Ovary (tissue), 10 donors: ENCODE measurements at regions of chr19 and their contacts with region 1.

Region 1: DNA sequence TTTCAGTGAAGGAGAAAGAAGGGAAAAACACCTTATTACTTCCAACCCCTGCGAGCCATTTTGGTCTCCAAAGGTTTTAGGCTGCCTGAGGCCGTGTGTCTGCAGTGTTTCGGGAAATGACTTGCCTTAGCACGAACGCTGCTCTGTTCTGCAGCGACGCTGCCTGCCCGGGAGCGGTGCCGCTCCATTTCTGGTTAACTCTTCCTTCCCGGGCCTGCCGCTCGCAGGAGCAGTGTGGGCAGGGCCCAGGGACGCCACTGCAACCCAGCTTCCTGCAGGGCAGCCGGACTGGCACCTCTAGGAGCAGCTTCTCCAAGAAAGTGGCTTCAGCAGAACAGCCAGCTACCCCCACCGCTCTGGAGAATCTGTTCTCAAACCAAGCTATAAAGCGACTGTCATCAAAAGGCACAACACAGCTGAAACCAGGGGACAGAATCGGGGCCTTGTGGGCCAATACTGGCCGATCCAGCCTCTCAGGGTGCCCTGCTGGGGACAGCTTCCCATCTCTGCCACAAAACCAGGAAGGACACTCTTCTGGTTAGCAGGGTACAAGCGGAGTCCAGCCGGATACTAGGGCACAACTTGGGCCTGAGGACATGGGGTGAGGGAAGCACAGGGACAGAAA is 72.2 kb downstream of the KCTD15 start:
- DNase-seq: peak in 3 of 5 donors; percentile 24 to 49 (median 30)
- H3K4me3 ChIP-seq: no peak overlapping the region
- H3K27ac ChIP-seq: no peak overlapping the region
- H3K4me1 ChIP-seq: peaks cover 2% of the 10 kb centered on the region
- H3K27me3 ChIP-seq: no peaks in the 10 kb centered on the region
- CTCF ChIP-seq: no peak
- EP300 ChIP-seq: no peak
- POLR2A ChIP-seq: no peak

Region 2: GRCh38 chr19:33785795-33786194 is 83.1 kb before region 1 on chr19:
- intact Hi-C with region 1: loop called in 1 of 4 experiments (anchors 10 kb)
- DNase-seq: no peak
- H3K4me3 ChIP-seq: no peak overlapping the region
- H3K27ac ChIP-seq: no peak overlapping the region
- H3K4me1 ChIP-seq: peaks cover under 1% of the 10 kb centered on the region
- H3K27me3 ChIP-seq: no peaks in the 10 kb centered on the region
- CTCF ChIP-seq: no peak
- EP300 ChIP-seq: no peak
- POLR2A ChIP-seq: no peak

Region 3: GRCh38 chr19:33815380-33816340 is 53.2 kb before region 1 on chr19:
- intact Hi-C with region 1: loop called in 1 of 4 experiments (anchors 2 kb)
- DNase-seq: no peak
- H3K4me3 ChIP-seq: no peak overlapping the region
- H3K27ac ChIP-seq: no peak overlapping the region
- H3K4me1 ChIP-seq: peaks cover 10% of the 10 kb centered on the region
- H3K27me3 ChIP-seq: no peaks in the 10 kb centered on the region
- CTCF ChIP-seq: no peak
- EP300 ChIP-seq: no peak
- POLR2A ChIP-seq: no peak